HAP-1 (cell line): ENCODE measurements at regions of chr4 and their contacts with region 1.

Region 1: GRCh38 chr4:3352941-3353594 is 60.2 kb downstream of the RGS12 start:
- DNase-seq: no peak
- H3K4me3 ChIP-seq: no peak overlapping the region
- H3K4me1 ChIP-seq: peaks cover 7% of the 10 kb centered on the region; the same call in 1 of the 2 replicates
- H3K27me3 ChIP-seq: no peaks in the 10 kb centered on the region

Region 2: DNA sequence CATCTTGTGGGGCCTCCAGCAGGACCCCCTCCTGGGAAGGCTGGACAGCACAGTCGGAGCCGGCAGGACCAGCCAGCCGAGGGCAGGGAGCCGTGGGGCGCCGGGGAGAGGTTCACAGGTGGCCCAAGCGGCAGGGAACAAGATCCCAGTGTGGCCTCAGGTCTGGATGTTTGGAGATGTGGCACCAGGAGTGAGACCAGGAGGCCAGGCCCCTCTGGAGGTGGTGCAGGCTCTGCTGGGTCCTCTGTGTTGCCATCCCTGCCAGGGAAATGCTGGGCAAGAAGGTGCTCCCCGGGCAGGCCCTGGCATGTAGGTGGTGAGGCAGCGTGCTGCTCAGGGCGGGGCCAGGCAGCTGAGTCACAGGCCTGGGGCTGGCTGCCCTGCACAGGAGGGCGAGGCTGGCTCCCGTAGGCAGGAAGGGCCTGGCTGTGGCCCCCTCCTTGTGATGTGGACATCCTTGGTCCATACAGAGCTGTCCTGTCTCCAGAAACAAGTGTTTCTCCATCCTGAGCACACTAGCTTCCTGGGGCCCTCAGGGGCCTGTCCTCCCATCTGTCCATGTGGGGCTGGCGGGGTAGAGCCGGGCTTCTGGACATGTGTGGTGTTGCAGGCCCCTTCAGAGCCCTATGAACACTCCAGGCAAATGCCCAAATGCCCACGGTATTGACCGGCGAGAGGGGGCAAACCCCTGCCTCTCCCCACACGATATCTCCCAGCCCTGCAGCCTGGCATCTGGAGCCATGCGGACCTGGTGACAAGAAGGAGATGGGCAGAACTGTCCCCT is 83.9 kb after region 1 on chr4:
- in situ Hi-C with region 1: loop called (anchors 5 kb)
- DNase-seq: no peak
- H3K4me3 ChIP-seq: no peak overlapping the region
- H3K4me1 ChIP-seq: no peaks in the 10 kb centered on the region
- H3K27me3 ChIP-seq: no peaks in the 10 kb centered on the region